Mammary epithelial cell (primary cell): ENCODE measurements at regions of chr18 and their contacts with region 1.

Region 1: GRCh38 chr18:76492669-76493212 is 2.3 kb downstream of the ZNF516 start:
- DNase-seq: peak; percentile 98
- H3K4me3 ChIP-seq: peak overlapping the region; percentile 83 to 94 (median 92)
- H3K27ac ChIP-seq: peak overlapping the region; percentile 77
- H3K4me1 ChIP-seq: peaks cover 20% of the 10 kb centered on the region
- H3K27me3 ChIP-seq: no peaks in the 10 kb centered on the region
- CTCF ChIP-seq: no peak

Region 2: DNA sequence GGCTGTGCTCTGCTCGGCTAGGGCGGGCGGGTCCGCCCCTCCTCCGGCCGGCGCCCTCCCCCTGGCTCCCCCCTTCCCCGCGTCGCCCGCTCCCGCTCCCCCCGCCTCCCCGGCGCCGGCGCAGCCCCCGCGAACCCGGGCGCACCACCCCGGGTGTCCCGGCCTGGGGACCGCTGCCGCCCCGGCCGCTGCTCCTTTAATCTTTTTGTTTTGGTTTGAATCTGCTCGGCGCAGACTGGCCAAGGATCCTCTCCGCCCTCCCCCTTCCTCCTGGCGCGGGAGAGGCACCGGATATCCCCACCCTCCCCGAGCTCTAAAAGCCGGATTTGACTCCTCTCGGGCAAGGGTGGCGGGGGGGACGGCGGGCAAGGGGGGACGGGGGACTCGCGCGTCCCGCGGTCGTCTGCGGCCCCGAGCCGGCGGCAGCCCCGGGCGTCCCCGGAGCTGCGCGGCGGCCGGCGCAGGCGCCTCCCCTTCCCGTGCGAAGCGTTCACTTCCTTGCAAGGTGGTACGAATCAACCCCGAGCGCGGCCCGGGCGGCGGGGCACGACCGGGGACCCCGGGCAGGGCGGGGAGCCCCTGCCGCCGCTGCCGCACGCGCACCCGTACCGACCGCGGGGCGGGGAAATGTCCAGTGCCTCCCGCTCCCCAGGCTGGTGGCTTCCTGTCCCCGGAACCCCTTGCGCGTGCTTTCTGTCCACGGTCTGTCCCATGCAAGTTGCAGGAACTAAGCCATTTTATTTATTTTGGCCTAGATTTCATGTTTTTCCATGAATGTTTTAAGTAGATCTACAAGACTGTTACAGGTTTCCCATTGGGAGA is 1283.4 kb before region 1 on chr18 and contains the start of gene PTGR3:
- CTCF ChIA-PET with region 1: interaction called, 22 read pairs
- dilution Hi-C with region 1: no loop called
- in situ Hi-C with region 1: no loop called
- intact Hi-C with region 1: no loop called
- DNase-seq: peak; percentile 81
- H3K4me3 ChIP-seq: peak within 1 kb of the TSS; percentile 79 to 98 (median 88)
- H3K27ac ChIP-seq: peak within 1 kb of the TSS; percentile 74
- H3K4me1 ChIP-seq: peaks cover 36% of the 10 kb centered on the region
- H3K27me3 ChIP-seq: no peaks in the 10 kb centered on the region
- CTCF ChIP-seq: no peak
- total RNA-seq, gene PTGR3: 15.2 to 29.4 TPM

Region 3: GRCh38 chr18:76459687-76460350 is 32.9 kb before region 1 on chr18:
- CTCF ChIA-PET with region 1: no interaction called
- dilution Hi-C with region 1: no loop called
- in situ Hi-C with region 1: no loop called
- intact Hi-C with region 1: loop called (anchors 1 kb)
- DNase-seq: peak; percentile 99
- H3K4me3 ChIP-seq: peak overlapping the region; percentile 1 to 23 (median 18)
- H3K27ac ChIP-seq: peak overlapping the region; percentile 89
- H3K4me1 ChIP-seq: peaks cover 26% of the 10 kb centered on the region
- H3K27me3 ChIP-seq: no peaks in the 10 kb centered on the region
- CTCF ChIP-seq: peak in 1 of 2 donors; percentile 37

Region 4: DNA sequence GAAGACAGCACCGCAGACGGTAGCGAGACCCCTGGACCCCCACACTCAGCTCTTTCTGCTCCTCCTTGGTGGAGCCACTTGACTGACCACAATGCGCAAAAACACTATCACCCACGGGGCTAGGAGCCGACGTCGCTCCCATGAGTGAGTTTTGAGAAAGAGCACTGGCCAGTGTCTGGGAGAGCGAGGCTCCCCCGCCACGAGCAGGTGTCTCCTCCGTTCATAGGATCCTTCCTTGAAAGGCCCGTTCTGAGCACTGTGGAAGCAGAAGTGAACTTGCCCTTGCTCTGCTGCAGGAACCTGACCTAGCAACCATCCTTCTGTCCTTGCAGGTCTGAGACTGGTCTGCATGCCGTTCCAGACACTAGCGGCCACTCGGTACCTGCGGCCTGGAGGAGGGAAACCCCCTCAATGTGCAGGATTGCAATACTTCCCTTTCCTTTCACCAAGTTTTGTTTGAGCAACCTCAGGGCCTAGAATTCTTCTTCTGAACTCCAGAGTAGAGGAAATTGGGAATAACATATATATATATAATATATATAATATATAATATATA is 15.2 kb after region 1 on chr18:
- CTCF ChIA-PET with region 1: no interaction called
- dilution Hi-C with region 1: no loop called
- in situ Hi-C with region 1: no loop called
- intact Hi-C with region 1: no loop called
- DNase-seq: no peak
- H3K4me3 ChIP-seq: no peak overlapping the region
- H3K27ac ChIP-seq: no peak overlapping the region
- H3K4me1 ChIP-seq: no peaks in the 10 kb centered on the region
- H3K27me3 ChIP-seq: no peaks in the 10 kb centered on the region
- CTCF ChIP-seq: no peak

Region 5: GRCh38 chr18:76524900-76525698 is 32.4 kb after region 1 on chr18:
- CTCF ChIA-PET with region 1: no interaction called
- dilution Hi-C with region 1: no loop called
- in situ Hi-C with region 1: no loop called
- intact Hi-C with region 1: loop called (anchors 2 kb)
- DNase-seq: peak; percentile 37
- H3K4me3 ChIP-seq: peak overlapping the region; percentile 35 to 56 (median 52)
- H3K27ac ChIP-seq: peak overlapping the region; percentile 49
- H3K4me1 ChIP-seq: peaks cover 11% of the 10 kb centered on the region
- H3K27me3 ChIP-seq: no peaks in the 10 kb centered on the region
- CTCF ChIP-seq: no peak

Region 6: GRCh38 chr18:76686737-76687262 is 194.1 kb after region 1 on chr18:
- CTCF ChIA-PET with region 1: interaction called, 4 read pairs
- dilution Hi-C with region 1: no loop called
- in situ Hi-C with region 1: no loop called
- intact Hi-C with region 1: loop called (anchors 1 kb)
- DNase-seq: peak; percentile 63
- H3K4me3 ChIP-seq: no peak overlapping the region
- H3K27ac ChIP-seq: peak overlapping the region; percentile 87
- H3K4me1 ChIP-seq: peaks cover 28% of the 10 kb centered on the region
- H3K27me3 ChIP-seq: no peaks in the 10 kb centered on the region
- CTCF ChIP-seq: peak; percentile 61 to 75